ENCODE measurements at regions of chr19 and their contacts with region 1.

Region 1: DNA sequence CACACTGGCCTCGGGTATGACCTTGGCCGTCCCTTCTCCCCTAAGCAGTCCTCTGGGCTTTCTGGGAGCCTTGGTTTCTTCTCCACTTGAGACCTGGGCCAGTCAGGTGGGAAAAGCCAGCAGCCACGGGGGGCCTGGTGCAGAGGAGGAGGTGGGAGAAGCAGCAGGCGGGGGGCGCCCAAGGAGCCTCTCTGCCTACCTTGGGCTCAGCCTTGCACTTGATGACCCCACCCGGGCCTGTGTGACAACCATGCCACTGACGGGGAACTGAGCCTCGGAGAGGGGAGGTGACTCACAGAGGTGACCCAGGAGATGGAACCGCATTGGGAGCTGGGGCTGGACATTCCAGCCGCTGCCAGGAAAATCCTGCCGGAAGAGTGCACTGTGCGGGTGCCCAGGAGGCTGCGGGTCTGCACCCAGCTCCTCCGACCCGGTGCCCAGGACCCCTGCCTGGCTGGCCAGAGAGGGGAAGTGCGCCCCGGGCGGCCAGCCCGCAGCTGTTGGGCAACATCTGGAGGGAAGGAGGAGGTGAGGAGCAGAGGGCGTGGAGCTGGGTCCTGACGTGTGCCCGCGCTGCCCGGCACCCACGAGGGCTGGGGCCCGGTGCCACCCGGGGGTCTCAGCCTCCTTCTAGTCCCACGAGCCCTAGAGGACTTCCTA is 23.4 kb upstream of the SLC7A10 start:
- DNase-seq: peak; percentile 53
- ATAC-seq: peak; percentile 59
- H3K4me3 ChIP-seq: peak overlapping the region; percentile 25 to 69 (median 27); a peak in 5 of 6 replicates
- H3K27ac ChIP-seq: peak overlapping the region; percentile 83
- H3K4me1 ChIP-seq: peaks cover 62% of the 10 kb centered on the region
- H3K27me3 ChIP-seq: peaks cover 3 to 4% of the 10 kb centered on the region in 2 experiments; a peak in 3 of 5 replicates
- CTCF ChIP-seq: peak; percentile 69
- EP300 ChIP-seq: no peak
- POLR2A ChIP-seq: no peak
- RAD21 ChIP-seq: peak; percentile 36; the same call in 1 of the 2 replicates

Region 2: GRCh38 chr19:33204136-33204973 is 44.7 kb before region 1 on chr19:
- CTCF ChIA-PET with region 1: no interaction called
- POLR2A ChIA-PET with region 1: no interaction called
- in situ Hi-C with region 1: no loop called
- intact Hi-C with region 1: no loop called
- DNase-seq: no peak
- ATAC-seq: no peak
- H3K4me3 ChIP-seq: no peak overlapping the region
- H3K27ac ChIP-seq: no peak overlapping the region
- H3K4me1 ChIP-seq: peaks cover 4% of the 10 kb centered on the region
- H3K27me3 ChIP-seq: no peaks in the 10 kb centered on the region
- CTCF ChIP-seq: no peak
- EP300 ChIP-seq: no peak
- POLR2A ChIP-seq: no peak
- RAD21 ChIP-seq: no peak

Region 3: GRCh38 chr19:33292595-33293441 is 43.7 kb after region 1 on chr19:
- CTCF ChIA-PET with region 1: no interaction called
- POLR2A ChIA-PET with region 1: interaction called, 51 read pairs
- in situ Hi-C with region 1: no loop called
- intact Hi-C with region 1: loop called (anchors 2 kb)
- DNase-seq: no peak
- ATAC-seq: peak; percentile 4; the same call in 2 of the 3 replicates
- H3K4me3 ChIP-seq: peak overlapping the region; percentile 39 to 69 (median 41); a peak in 5 of 6 replicates
- H3K27ac ChIP-seq: peak overlapping the region; percentile 91
- H3K4me1 ChIP-seq: peaks cover 93% of the 10 kb centered on the region
- H3K27me3 ChIP-seq: no peaks in the 10 kb centered on the region
- CTCF ChIP-seq: no peak
- EP300 ChIP-seq: no peak
- POLR2A ChIP-seq: no peak
- RAD21 ChIP-seq: no peak

Region 4: GRCh38 chr19:33416307-33417215 is 167.5 kb after region 1 on chr19:
- CTCF ChIA-PET with region 1: no interaction called
- POLR2A ChIA-PET with region 1: no interaction called
- in situ Hi-C with region 1: no loop called
- intact Hi-C with region 1: no loop called
- DNase-seq: peak; percentile 44
- ATAC-seq: peak; percentile 75
- H3K4me3 ChIP-seq: no peak overlapping the region
- H3K27ac ChIP-seq: no peak overlapping the region
- H3K4me1 ChIP-seq: peaks cover 8% of the 10 kb centered on the region
- H3K27me3 ChIP-seq: no peaks in the 10 kb centered on the region
- CTCF ChIP-seq: peak; percentile 77
- EP300 ChIP-seq: no peak
- POLR2A ChIP-seq: no peak
- RAD21 ChIP-seq: peak; percentile 57